CD14-positive monocyte (primary cell): ENCODE measurements at regions of chr17 and their contacts with region 1.

Region 1: DNA sequence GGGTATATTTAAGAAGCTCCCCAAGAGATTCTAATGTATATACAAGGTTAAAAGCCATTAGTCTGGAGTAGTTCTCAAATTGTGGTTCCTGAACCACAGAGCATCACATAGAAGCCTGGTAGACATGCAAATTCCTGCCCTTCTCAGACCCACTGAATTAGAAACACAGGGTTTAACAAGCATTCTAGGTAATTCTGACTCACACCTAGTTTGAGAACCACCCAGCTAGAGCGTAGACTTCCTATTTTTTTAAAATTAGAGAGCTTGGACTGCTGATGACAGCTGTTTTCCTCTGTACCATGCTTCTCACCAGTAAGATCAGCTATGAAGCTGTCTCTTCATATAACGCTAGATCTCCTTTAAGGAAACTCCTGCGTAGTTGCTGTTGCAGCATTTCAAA is 50.6 kb downstream of the HS3ST3B1 start:
- DNase-seq: peak; percentile 85 to 91 (median 87)
- H3K4me3 ChIP-seq: peak overlapping the region in 1 of 3 experiments; percentile 46
- H3K4me3 Mint-ChIP-seq: peak overlapping the region; percentile 66 to 85
- H3K27ac ChIP-seq: peak overlapping the region in 1 of 2 donors; percentile 94
- H3K27ac Mint-ChIP-seq: peak overlapping the region in 5 of 7 donors; percentile 97 to 100 (median 99)
- H3K4me1 ChIP-seq: peaks cover 25% of the 10 kb centered on the region in 2 donors
- H3K4me1 Mint-ChIP-seq: peaks cover 22% of the 10 kb centered on the region
- H3K27me3 ChIP-seq: no peaks in the 10 kb centered on the region
- H3K27me3 Mint-ChIP-seq: peaks cover 0 to 4% (median 0%) of the 10 kb centered on the region in 3 donors
- CTCF ChIP-seq: no peak

Region 2: GRCh38 chr17:13931800-13932460 is 419.6 kb before region 1 on chr17:
- intact Hi-C with region 1: loop called in 1 of 2 experiments (anchors 5 kb)
- DNase-seq: peak; percentile 89 to 98 (median 96)
- H3K4me3 ChIP-seq: peak overlapping the region in 1 of 3 experiments; percentile 37
- H3K4me3 Mint-ChIP-seq: peak overlapping the region in 1 of 2 donors; percentile 44
- H3K27ac ChIP-seq: peak overlapping the region; percentile 61 to 95
- H3K27ac Mint-ChIP-seq: peak overlapping the region; percentile 94 to 99 (median 98)
- H3K4me1 ChIP-seq: peaks cover 39% of the 10 kb centered on the region in 2 donors
- H3K4me1 Mint-ChIP-seq: peaks cover 39% of the 10 kb centered on the region
- H3K27me3 ChIP-seq: no peaks in the 10 kb centered on the region
- H3K27me3 Mint-ChIP-seq: no peaks in the 10 kb centered on the region
- CTCF ChIP-seq: no peak

Region 3: GRCh38 chr17:14118951-14119350 is 232.5 kb before region 1 on chr17:
- intact Hi-C with region 1: no loop called
- DNase-seq: no peak
- H3K4me3 ChIP-seq: no peak overlapping the region
- H3K4me3 Mint-ChIP-seq: no peak overlapping the region
- H3K27ac ChIP-seq: no peak overlapping the region
- H3K27ac Mint-ChIP-seq: no peak overlapping the region
- H3K4me1 ChIP-seq: no peaks in the 10 kb centered on the region
- H3K4me1 Mint-ChIP-seq: peaks cover 13% of the 10 kb centered on the region
- H3K27me3 ChIP-seq: no peaks in the 10 kb centered on the region
- H3K27me3 Mint-ChIP-seq: peaks cover 0 to 1% (median 0%) of the 10 kb centered on the region in 3 donors
- CTCF ChIP-seq: no peak

Region 4: DNA sequence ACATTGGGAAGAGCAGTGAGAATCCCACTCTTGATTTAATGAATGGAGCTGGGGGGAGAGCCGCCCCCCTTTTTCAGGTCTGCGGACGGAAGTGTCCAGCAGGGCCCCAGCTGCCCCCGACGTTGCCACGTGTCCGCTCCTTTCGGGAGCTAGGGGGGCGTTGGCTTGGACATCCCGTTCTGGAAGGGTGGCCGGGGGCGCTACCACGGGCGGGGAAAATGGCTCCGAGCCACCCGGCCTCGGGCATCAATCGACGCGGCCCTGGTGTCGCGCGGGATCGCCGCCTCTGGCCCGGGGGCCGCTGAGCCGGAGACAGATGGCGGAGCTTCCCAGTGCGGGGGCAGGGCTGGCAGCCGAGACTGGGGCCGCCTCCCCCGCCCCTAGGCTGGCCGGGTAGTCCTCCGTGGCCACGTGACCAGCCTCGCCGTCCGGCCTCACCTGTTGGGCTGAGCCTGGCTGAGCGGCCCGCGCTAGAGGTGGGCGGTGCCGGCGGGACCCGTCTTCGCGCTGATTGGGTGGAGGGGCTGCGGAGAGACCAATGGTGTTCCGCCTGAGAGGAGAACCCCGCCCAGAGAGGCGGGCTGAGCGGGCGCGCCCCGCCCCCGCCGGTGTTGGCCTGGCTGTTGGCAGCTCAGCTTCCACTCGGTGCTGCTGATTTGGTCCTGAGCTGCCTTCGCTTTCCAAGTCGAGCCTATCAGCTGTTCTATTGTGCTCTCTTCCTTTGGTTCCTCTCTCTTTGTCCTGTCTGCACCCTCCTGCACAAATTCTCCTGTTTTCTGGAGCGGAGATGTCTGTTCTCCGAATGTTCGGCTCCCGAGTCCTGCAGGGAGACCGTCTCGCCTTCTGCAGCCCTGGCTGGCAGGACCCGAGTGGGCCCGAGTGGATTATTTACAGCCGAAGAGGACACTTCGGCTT is 42.3 kb before region 1 on chr17:
- intact Hi-C with region 1: loop called (anchors 2 to 5 kb)
- DNase-seq: peak; percentile 77 to 83 (median 81)
- H3K4me3 ChIP-seq: peak overlapping the region; percentile 21 to 76 (median 39)
- H3K4me3 Mint-ChIP-seq: peak overlapping the region; percentile 87 to 94
- H3K27ac ChIP-seq: no peak overlapping the region
- H3K27ac Mint-ChIP-seq: peak overlapping the region in 5 of 7 donors; percentile 57 to 80 (median 79)
- H3K4me1 ChIP-seq: peaks cover 26 to 36% of the 10 kb centered on the region in 2 donors
- H3K4me1 Mint-ChIP-seq: peaks cover 46% of the 10 kb centered on the region
- H3K27me3 ChIP-seq: peaks cover 6 to 31% of the 10 kb centered on the region in 2 donors
- H3K27me3 Mint-ChIP-seq: peaks cover 13 to 36% (median 16%) of the 10 kb centered on the region in 3 donors
- CTCF ChIP-seq: no peak

Region 5: GRCh38 chr17:14366199-14366598 is 14.7 kb after region 1 on chr17:
- intact Hi-C with region 1: no loop called
- DNase-seq: no peak
- H3K4me3 ChIP-seq: no peak overlapping the region
- H3K4me3 Mint-ChIP-seq: no peak overlapping the region
- H3K27ac ChIP-seq: no peak overlapping the region
- H3K27ac Mint-ChIP-seq: no peak overlapping the region
- H3K4me1 ChIP-seq: no peaks in the 10 kb centered on the region
- H3K4me1 Mint-ChIP-seq: peaks cover under 1% of the 10 kb centered on the region
- H3K27me3 ChIP-seq: no peaks in the 10 kb centered on the region
- H3K27me3 Mint-ChIP-seq: peaks cover 0 to 5% (median 0%) of the 10 kb centered on the region in 3 donors
- CTCF ChIP-seq: no peak